AG04449 (cell line): ENCODE measurements at regions of chr3 and their contacts with region 1.

Region 1: GRCh38 chr3:50611464-50612233 is at the start of gene CISH:
- DNase-seq: no peak
- H3K4me3 ChIP-seq: peak within 1 kb of the TSS; percentile 70
- CTCF ChIP-seq: peak; percentile 71

Region 2: DNA sequence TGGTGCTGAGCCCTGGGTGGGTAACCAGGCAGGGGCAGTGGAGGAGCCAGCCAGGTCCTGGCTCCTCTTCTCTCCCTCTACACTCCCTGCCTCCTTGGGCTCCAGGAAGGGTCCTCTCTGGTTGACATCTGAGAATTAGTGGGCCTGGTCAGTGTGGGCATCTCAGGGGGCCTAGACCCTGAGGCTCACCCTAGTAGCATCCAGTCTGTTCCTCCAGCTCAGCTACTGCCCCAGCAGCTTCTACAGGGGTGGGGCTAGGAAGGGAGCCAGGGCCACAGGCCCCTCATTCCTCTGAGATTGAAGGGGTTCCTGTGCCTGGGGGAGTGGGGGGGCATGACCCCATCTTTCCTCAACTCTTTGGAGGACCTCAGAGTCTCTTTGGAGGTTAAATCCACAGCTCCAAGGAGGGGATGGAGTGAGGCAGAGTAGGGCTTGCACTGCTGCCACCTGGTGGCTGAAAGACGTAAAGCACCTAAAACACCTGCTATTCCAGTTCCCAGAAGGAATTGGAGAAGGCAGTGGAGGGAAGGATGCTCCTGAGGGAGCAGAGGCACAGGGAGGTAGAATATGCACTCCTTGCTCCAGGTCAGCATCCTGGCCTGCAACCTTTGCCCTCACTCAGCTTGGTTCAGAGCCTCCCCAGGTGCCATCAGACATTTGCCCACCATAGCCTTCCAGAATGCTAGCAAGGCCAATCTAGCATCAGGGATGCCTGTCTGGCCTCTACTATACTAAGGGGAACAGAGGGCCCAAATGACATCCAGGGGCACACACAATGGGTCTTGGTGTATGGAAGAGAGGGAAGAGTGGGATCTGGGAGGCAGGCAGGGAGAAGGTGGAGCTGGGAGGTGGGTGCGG is 69.2 kb before region 1 on chr3:
- CTCF ChIA-PET with region 1: interaction called, 24 read pairs
- POLR2A ChIA-PET with region 1: no interaction called
- DNase-seq: no peak
- H3K4me3 ChIP-seq: no peak overlapping the region
- CTCF ChIP-seq: peak; percentile 84

Region 3: DNA sequence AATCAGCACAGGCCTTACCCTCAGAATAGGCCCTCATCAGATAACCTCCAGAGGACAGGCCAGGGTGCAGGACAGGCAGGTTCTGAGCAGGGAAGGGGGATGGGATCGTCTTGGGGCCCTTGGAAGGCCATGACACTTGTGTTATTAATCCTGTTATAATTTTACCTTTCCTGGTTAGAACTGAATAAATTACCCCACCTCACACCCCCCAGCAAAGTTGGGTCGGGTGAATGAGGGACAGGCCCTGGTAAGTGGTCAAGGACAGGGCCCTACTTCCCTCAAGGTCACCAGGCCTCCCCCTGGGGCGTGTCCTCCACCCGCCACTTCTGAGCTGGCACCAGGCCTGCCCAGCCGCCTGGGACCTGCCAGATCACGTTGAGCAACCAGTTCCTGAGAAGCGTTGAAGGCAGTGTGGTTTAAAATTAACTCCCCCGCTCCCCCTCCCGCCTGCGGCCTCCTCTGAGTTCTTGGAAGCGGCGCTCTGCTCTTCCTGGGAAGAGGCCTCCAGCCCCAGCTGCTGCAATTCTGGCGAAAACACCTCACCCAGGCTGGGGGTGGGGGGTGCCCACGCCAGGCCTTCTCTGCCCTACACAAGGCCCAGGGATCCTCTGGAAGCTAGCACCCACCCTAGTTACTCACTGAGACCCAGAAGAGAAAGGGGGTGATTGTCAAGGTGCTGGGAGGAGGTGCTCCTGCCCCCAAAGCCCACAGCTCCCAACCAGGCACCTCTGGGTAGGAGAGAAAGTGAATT is 10.6 kb before region 1 on chr3:
- CTCF ChIA-PET with region 1: interaction called, 173 read pairs
- POLR2A ChIA-PET with region 1: interaction called, 13 read pairs
- DNase-seq: peak; percentile 94
- H3K4me3 ChIP-seq: peak overlapping the region; percentile 30
- CTCF ChIP-seq: no peak

Region 4: GRCh38 chr3:51123531-51123930 is 511.9 kb after region 1 on chr3:
- CTCF ChIA-PET with region 1: no interaction called
- POLR2A ChIA-PET with region 1: no interaction called
- DNase-seq: no peak
- H3K4me3 ChIP-seq: no peak overlapping the region
- CTCF ChIP-seq: no peak

Region 5: DNA sequence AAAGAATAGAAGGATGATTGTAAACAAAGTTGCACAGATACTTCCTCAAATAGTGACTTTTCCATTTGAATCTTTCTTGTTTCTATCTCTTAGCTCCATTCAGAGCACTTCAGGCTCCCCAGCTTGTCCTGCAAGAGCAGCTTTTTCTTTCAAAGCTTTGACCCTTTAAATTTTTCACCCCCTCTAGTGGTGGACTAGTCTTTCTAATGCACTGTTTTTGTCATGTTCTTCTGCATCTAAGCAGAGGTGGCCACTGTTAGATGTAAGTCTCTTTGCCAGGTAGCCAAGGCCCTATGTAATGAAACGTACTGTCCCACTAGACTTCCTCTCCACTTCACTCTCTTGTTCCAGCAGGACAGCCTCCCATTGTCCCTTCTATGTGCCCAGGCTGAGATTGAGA is 699.4 kb after region 1 on chr3:
- CTCF ChIA-PET with region 1: interaction called, 33 read pairs
- POLR2A ChIA-PET with region 1: no interaction called
- DNase-seq: peak; percentile 7
- H3K4me3 ChIP-seq: no peak overlapping the region
- CTCF ChIP-seq: peak; percentile 32

Region 6: DNA sequence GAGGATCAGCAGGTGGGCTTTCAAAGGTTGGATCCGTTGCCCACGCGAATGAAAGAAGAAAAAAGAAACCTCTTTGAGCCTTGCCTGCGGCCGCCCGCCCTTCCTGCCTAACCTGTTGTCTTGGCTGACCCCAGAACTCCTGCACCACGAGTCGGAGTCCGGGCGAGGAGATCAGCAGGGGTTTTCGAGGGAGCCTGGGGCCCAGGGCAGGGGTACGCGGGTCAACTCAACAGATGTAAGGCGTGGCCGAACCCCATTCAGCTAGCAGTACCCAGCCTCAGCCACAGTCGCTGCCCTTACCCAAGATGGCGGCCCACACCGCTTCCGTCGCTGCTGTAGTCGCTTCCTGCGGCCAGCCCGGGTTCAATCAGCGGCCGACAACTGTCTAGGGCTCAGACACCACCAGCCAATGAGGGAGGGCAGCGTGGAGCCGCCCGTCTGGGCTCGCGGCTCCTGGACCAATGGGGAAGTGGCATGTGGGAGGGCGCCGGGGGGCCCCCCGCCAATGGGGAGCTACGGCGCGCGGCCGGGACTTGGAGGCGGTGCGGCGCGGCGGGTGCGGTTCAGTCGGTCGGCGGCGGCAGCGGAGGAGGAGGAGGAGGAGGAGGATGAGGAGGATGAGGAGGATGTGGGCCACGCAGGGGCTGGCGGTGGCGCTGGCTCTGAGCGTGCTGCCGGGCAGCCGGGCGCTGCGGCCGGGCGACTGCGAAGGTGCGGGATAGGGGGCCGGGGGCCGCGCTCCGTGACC is 773.3 kb after region 1 on chr3 and contains the start of gene MANF:
- CTCF ChIA-PET with region 1: interaction called, 95 read pairs
- POLR2A ChIA-PET with region 1: interaction called, 4 read pairs
- DNase-seq: peak; percentile 87
- H3K4me3 ChIP-seq: peak within 1 kb of the TSS; percentile 96
- CTCF ChIP-seq: no peak

Region 7: DNA sequence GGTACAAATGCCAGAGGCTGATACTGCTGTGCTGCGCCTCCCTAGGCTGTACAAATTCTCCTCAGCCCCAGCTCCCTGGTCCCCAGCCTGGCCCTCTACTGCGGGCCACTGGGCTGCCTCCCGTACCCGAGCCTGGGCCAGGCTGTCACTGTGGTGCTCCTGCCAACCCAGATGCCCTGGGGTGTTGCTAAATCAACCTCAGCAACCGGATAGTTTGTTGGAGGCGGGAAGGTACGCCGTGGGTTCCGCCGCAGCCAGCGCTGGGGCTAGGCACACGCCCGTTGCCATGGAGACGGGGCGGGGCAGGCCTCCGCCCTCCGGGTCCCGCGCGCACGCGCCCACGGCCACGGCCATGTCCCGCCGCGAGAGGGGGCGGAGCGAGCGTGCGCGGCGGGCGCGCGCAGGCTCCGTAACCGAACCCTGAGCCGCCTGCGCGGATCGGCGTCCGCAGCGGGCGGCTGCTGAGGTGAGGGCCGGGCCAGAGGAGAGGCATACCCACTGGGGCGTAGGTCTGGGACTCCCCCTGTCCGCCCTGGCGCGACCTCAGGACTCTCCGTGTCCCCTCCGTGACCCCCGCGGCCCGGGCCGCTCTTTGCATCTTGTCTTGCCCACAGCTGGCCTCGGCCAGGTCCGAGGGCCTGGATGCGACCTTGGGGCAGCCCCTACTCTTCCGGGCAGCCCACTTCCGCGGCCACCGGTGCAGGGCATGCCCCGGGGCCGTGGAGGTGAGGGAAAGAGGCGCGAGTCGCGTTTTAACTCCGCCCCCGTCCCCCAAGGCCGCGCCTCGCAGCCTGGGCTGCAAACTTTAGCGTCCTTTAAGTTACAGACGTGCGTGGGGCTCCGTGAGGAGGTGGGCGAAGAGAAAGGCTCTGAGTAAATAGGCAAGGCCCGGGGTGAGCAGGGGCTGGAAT is 1059.4 kb after region 1 on chr3 and contains the start of gene TEX264:
- CTCF ChIA-PET with region 1: interaction called, 11 read pairs
- POLR2A ChIA-PET with region 1: no interaction called
- DNase-seq: no peak
- H3K4me3 ChIP-seq: peak within 1 kb of the TSS; percentile 82
- CTCF ChIP-seq: no peak